Caco-2 (cell line): ENCODE measurements at regions of chr12 and their contacts with region 1.

Region 1: GRCh38 chr12:24551163-24551786 is 397.6 kb downstream of the BCAT1 start:
- DNase-seq: no peak
- H3K4me3 ChIP-seq: no peak overlapping the region
- H3K4me3 Mint-ChIP-seq: no peak overlapping the region
- H3K27ac Mint-ChIP-seq: no peak overlapping the region
- H3K4me1 ChIP-seq: no peaks in the 10 kb centered on the region
- H3K4me1 Mint-ChIP-seq: peaks cover 7% of the 10 kb centered on the region
- H3K27me3 ChIP-seq: no peaks in the 10 kb centered on the region
- H3K27me3 Mint-ChIP-seq: no peaks in the 10 kb centered on the region
- CTCF ChIP-seq: no peak

Region 2: DNA sequence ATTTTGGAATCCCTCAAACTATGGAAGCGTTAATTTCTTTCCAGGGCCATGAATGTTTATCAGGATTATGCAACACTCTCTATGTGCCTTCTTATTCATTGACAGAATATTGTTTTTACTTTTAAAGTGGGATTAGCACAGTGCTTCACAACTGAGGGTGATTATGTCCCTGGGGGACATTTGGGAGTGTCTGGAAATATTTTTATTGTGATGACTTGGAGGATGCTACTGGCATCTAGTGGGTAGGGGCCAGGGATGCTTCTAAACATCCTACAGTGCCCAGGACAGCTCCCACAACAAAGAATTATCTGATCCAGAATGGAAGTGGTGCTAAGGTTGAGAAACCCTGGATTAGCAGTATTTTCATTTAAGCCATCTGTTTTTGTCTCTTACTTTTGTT is 263.3 kb before region 1 on chr12:
- CTCF ChIA-PET with region 1: interaction called, 11 read pairs
- POLR2A ChIA-PET with region 1: no interaction called
- intact Hi-C with region 1: no loop called
- DNase-seq: no peak
- H3K4me3 ChIP-seq: no peak overlapping the region
- H3K4me3 Mint-ChIP-seq: no peak overlapping the region
- H3K27ac Mint-ChIP-seq: no peak overlapping the region
- H3K4me1 ChIP-seq: no peaks in the 10 kb centered on the region
- H3K4me1 Mint-ChIP-seq: peaks cover 6% of the 10 kb centered on the region
- H3K27me3 ChIP-seq: no peaks in the 10 kb centered on the region
- H3K27me3 Mint-ChIP-seq: no peaks in the 10 kb centered on the region
- CTCF ChIP-seq: no peak

Region 3: DNA sequence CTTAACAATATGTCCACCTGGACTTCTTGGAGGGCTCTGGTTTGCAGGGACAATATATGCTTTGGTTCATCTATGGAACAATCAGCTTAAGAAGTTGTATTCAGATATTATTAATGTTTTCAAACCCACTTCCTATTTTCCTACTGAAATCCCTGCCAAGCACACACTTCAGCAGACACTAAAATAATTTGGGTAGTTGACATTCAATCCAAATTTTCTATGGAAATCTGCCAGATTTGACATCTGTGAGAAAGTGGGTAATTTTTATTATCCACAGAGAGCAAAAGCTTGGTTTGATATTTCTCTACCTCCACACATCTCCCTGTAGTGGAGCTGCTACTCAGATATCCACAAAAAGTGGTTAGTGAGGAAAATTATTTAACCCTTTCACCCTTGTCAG is 223.0 kb before region 1 on chr12:
- CTCF ChIA-PET with region 1: no interaction called
- POLR2A ChIA-PET with region 1: interaction called, 11 read pairs
- intact Hi-C with region 1: no loop called
- DNase-seq: no peak
- H3K4me3 ChIP-seq: no peak overlapping the region
- H3K4me3 Mint-ChIP-seq: no peak overlapping the region
- H3K27ac Mint-ChIP-seq: no peak overlapping the region
- H3K4me1 ChIP-seq: no peaks in the 10 kb centered on the region
- H3K4me1 Mint-ChIP-seq: no peaks in the 10 kb centered on the region
- H3K27me3 ChIP-seq: no peaks in the 10 kb centered on the region
- H3K27me3 Mint-ChIP-seq: no peaks in the 10 kb centered on the region
- CTCF ChIP-seq: no peak